ENCODE measurements at regions of chr11 and their contacts with region 1.

Region 1: DNA sequence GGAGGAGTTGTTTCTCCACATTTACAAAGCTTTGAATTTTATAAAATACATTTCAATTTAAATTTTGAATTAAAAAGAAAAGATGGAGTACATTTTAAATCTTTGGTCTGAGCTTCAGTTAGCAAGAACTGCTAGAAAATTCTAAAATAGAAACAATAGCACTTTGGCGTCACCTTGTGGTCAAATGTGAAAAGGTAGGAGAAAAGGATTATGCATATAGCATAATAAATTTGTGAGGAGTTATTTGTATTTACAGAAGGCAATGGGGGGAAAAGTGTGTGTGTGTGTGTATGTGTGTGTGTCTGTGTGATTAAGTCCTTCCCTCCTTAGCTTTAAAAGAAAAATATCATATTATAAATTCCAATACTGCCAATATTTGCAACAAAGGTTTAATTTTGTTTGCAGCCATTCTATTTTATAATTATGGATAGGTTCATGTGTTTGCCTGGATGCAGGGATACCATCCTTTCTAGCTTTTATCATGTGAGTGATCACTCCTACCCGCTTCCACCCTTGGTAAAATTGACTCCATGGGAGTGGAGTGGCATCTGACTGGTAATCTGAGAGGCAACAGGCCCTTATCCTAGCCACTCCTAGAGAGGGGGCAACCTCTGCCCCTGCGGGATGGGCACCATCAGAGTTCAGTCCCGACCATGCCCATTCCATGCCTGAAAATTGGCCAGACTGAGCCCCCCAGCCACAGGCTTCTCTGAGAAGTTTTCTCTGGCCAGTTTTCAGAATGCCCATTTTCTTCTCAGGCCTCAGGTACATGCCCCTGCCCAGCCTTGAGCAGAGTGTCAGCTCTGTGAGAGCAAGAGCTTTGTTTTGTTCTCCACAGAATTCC is 13.6 kb upstream of the LGR4 start:
- DNase-seq: peak; percentile 40
- H3K4me3 ChIP-seq: no peak overlapping the region; a peak in 1 of 4 replicates
- H3K27ac ChIP-seq: no peak overlapping the region
- H3K4me1 ChIP-seq: no peaks in the 10 kb centered on the region
- H3K27me3 ChIP-seq: no peaks in the 10 kb centered on the region
- CTCF ChIP-seq: peak; percentile 98
- EP300 ChIP-seq: no peak
- RAD21 ChIP-seq: peak; percentile 98

Region 2: GRCh38 chr11:27158722-27159679 is 327.2 kb before region 1 on chr11:
- CTCF ChIA-PET with region 1: interaction called, 30 read pairs
- POLR2A ChIA-PET with region 1: no interaction called
- DNase-seq: peak; percentile 62
- H3K4me3 ChIP-seq: no peak overlapping the region
- H3K27ac ChIP-seq: peak overlapping the region in 1 of 2 experiments; percentile 44; a peak in 1 of 4 replicates
- H3K4me1 ChIP-seq: peaks cover 0 to 5% of the 10 kb centered on the region in 2 experiments; a peak in 1 of 4 replicates
- H3K27me3 ChIP-seq: no peaks in the 10 kb centered on the region
- CTCF ChIP-seq: peak; percentile 91
- EP300 ChIP-seq: no peak
- RAD21 ChIP-seq: peak; percentile 94

Region 3: DNA sequence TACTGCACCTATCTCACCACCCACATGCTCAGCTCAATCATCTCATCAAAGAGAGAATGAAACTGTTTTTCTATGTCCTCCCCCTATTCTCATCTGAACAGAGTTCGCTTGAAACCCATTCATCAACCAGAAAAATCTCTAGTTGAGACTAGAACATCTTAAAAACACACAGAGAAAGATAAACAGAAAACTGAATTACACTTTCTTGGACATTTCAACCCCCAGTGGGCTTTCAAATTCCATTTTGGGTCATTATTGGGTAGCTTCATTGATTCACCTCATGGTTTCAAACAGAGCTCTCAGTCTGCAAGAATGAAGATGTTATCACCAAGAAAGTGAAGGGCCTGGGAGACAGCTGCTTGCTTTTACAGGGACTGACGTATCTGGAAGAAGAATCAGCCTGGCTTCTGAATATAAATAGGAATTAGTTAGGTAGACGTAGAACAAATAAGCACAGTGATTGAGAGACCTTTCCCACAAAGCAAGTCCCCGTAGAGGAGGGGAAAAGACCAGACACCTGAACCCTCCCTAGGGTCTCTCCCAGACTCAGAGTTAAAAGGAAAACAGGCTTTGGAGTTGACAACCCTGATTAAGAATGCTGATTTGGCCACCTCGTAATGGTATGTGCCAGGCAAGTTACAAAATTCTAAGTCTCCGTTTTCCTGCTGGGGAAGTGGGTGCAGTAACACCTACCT is 289.8 kb before region 1 on chr11:
- CTCF ChIA-PET with region 1: interaction called, 35 read pairs
- POLR2A ChIA-PET with region 1: no interaction called
- DNase-seq: no peak
- H3K4me3 ChIP-seq: no peak overlapping the region
- H3K27ac ChIP-seq: peak overlapping the region; percentile 47 to 66; a peak in 3 of 4 replicates
- H3K4me1 ChIP-seq: peaks cover 25 to 28% of the 10 kb centered on the region in 2 experiments; a peak in 3 of 4 replicates
- H3K27me3 ChIP-seq: no peaks in the 10 kb centered on the region
- CTCF ChIP-seq: no peak
- EP300 ChIP-seq: peak in 1 of 2 experiments; percentile 67; a peak in 2 of 4 replicates
- RAD21 ChIP-seq: no peak

Region 4: GRCh38 chr11:27213232-27213660 is 272.9 kb before region 1 on chr11:
- CTCF ChIA-PET with region 1: interaction called, 12 read pairs
- POLR2A ChIA-PET with region 1: no interaction called
- DNase-seq: no peak
- H3K4me3 ChIP-seq: no peak overlapping the region
- H3K27ac ChIP-seq: peak overlapping the region; percentile 73 to 87
- H3K4me1 ChIP-seq: peaks cover 19 to 77% of the 10 kb centered on the region in 2 experiments
- H3K27me3 ChIP-seq: no peaks in the 10 kb centered on the region
- CTCF ChIP-seq: no peak
- EP300 ChIP-seq: peak in 1 of 2 experiments; percentile 90; a peak in 2 of 4 replicates
- RAD21 ChIP-seq: no peak

Region 5: GRCh38 chr11:27443746-27444507 is 42.2 kb before region 1 on chr11:
- CTCF ChIA-PET with region 1: interaction called, 10 read pairs
- POLR2A ChIA-PET with region 1: no interaction called
- DNase-seq: no peak
- H3K4me3 ChIP-seq: no peak overlapping the region
- H3K27ac ChIP-seq: no peak overlapping the region
- H3K4me1 ChIP-seq: peaks cover 5 to 11% of the 10 kb centered on the region in 2 experiments; a peak in 3 of 4 replicates
- H3K27me3 ChIP-seq: no peaks in the 10 kb centered on the region
- CTCF ChIP-seq: no peak
- EP300 ChIP-seq: no peak
- RAD21 ChIP-seq: no peak

Region 6: DNA sequence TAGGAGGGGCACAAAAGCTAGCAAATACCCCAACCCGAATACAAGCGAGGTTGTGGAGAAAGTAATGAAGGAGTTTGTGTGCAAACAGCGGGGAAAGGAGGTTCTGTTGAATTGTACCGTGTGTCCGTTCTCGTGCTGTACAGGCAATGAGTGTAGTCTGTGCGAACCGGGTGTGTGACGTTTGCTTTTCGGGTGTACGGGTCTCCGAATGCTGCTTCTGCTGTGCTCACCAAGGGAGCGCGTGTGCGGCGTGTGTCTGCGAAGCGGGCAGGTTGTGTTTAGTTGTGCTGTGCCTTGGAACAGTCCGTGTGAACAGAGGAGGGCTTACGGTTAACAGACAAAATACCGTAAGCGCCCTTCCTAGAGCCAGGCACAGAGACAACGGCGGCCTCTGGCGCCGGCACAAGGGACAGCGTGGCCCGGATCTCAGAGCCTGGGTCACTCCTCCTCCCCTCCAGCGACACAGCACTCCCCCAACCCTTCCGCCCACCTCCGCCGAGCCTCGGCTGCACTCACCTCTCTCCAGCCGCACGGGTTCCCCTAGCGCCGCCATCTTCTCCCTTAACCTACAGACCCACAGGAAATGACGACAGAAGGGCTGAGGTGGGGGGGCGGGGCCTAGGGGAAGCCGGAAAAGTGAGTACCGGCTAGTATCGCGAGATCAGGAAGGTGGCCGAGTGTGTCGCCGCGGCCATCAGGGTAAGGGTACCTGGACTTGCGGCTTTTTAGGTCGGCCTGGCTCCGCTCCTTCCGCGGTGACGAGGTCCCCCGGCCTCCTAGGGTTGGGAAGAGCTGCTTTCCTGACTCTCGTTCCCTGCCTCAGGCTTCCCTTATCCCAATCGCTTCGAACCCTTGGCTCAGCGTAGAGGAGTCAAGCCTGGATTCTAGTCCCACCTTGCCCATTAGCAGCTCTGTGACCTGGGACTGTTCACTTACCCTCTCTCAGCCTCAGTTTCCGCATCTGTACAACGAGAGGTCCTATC is 20.3 kb after region 1 on chr11 and contains the start of gene LIN7C:
- CTCF ChIA-PET with region 1: interaction called, 13 read pairs
- POLR2A ChIA-PET with region 1: no interaction called
- DNase-seq: peak; percentile 93
- H3K4me3 ChIP-seq: peak within 1 kb of the TSS; percentile 93 to 95
- H3K27ac ChIP-seq: peak within 1 kb of the TSS; percentile 79 to 92
- H3K4me1 ChIP-seq: peaks cover 5 to 20% of the 10 kb centered on the region in 2 experiments; a peak in 3 of 4 replicates
- H3K27me3 ChIP-seq: no peaks in the 10 kb centered on the region
- CTCF ChIP-seq: no peak; the same call in 1 of the 2 replicates
- EP300 ChIP-seq: no peak
- RAD21 ChIP-seq: no peak
- polyA plus RNA-seq, gene LIN7C: 7.3 and 11.0 TPM in 2 replicates

Region 7: GRCh38 chr11:27545946-27546345 is 59.8 kb after region 1 on chr11:
- CTCF ChIA-PET with region 1: no interaction called
- POLR2A ChIA-PET with region 1: no interaction called
- DNase-seq: no peak
- H3K4me3 ChIP-seq: no peak overlapping the region
- H3K27ac ChIP-seq: no peak overlapping the region
- H3K4me1 ChIP-seq: no peaks in the 10 kb centered on the region
- H3K27me3 ChIP-seq: no peaks in the 10 kb centered on the region
- CTCF ChIP-seq: no peak
- EP300 ChIP-seq: no peak
- RAD21 ChIP-seq: no peak

Region 8: GRCh38 chr11:27894552-27894951 is 408.4 kb after region 1 on chr11:
- CTCF ChIA-PET with region 1: no interaction called
- POLR2A ChIA-PET with region 1: no interaction called
- DNase-seq: no peak
- H3K4me3 ChIP-seq: no peak overlapping the region
- H3K27ac ChIP-seq: no peak overlapping the region
- H3K4me1 ChIP-seq: no peaks in the 10 kb centered on the region
- H3K27me3 ChIP-seq: no peaks in the 10 kb centered on the region
- CTCF ChIP-seq: no peak
- EP300 ChIP-seq: no peak
- RAD21 ChIP-seq: no peak